Caco-2 (cell line): ENCODE measurements at regions of chr4 and their contacts with region 1.

Region 1: DNA sequence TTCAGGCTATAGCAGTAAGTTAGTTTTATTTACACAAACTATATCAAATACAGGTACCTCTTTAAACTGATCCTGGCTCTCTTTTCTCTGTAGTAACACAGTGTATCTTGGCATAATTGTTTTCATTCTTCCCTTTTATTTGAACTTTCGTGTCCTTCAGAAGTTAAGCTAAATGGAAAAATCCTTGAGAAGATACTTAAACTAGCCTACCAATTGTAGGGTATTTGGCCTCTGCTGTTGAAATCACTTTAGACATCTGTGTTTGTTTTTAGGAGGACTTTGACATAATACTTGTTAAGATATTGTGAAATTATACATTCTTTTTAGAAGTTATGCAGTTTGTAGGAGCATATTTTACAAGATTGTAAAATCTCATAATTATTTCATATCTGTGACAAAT is 90.3 kb upstream of the GK2 start:
- DNase-seq: no peak
- H3K4me3 ChIP-seq: no peak overlapping the region
- H3K4me3 Mint-ChIP-seq: no peak overlapping the region
- H3K27ac Mint-ChIP-seq: no peak overlapping the region
- H3K4me1 ChIP-seq: no peaks in the 10 kb centered on the region
- H3K4me1 Mint-ChIP-seq: no peaks in the 10 kb centered on the region
- H3K27me3 ChIP-seq: no peaks in the 10 kb centered on the region
- H3K27me3 Mint-ChIP-seq: peaks cover 4% of the 10 kb centered on the region
- CTCF ChIP-seq: no peak

Region 2: DNA sequence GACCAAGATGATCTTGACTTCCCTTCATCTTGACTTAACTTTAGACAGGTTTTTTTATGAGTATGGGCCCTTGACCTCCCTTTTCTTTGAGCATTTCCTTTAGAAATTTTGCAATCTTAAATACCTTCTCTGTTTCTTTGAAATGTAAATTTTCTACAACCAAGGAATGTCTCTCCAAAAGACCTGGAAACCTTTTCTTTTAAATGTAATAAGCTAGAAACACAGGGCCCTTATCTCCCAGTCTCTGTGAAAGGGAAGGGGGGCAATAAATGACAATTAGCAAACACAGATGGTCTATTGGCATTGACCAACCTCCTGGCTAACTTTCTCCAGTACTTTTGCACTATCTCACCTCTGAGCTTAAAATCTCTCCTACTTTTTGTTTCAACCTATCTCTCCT is 54.0 kb after region 1 on chr4:
- CTCF ChIA-PET with region 1: no interaction called
- POLR2A ChIA-PET with region 1: no interaction called
- intact Hi-C with region 1: loop called (anchors 1 kb)
- DNase-seq: peak in 1 of 2 experiments; percentile 41
- H3K4me3 ChIP-seq: no peak overlapping the region
- H3K4me3 Mint-ChIP-seq: no peak overlapping the region
- H3K27ac Mint-ChIP-seq: no peak overlapping the region
- H3K4me1 ChIP-seq: 0 out of 2 replicates have a peak, but pooled peaks cover 4% of the 10 kb centered on the region
- H3K4me1 Mint-ChIP-seq: peaks cover 8% of the 10 kb centered on the region
- H3K27me3 ChIP-seq: no peaks in the 10 kb centered on the region
- H3K27me3 Mint-ChIP-seq: no peaks in the 10 kb centered on the region
- CTCF ChIP-seq: no peak

Region 3: GRCh38 chr4:79739912-79740311 is 241.6 kb after region 1 on chr4:
- CTCF ChIA-PET with region 1: no interaction called
- POLR2A ChIA-PET with region 1: no interaction called
- intact Hi-C with region 1: no loop called
- DNase-seq: no peak
- H3K4me3 ChIP-seq: no peak overlapping the region
- H3K4me3 Mint-ChIP-seq: no peak overlapping the region
- H3K27ac Mint-ChIP-seq: no peak overlapping the region
- H3K4me1 ChIP-seq: no peaks in the 10 kb centered on the region
- H3K4me1 Mint-ChIP-seq: no peaks in the 10 kb centered on the region
- H3K27me3 ChIP-seq: no peaks in the 10 kb centered on the region
- H3K27me3 Mint-ChIP-seq: no peaks in the 10 kb centered on the region
- CTCF ChIP-seq: no peak